ENCODE measurements at regions of chr6 and their contacts with region 1.

Region 1: DNA sequence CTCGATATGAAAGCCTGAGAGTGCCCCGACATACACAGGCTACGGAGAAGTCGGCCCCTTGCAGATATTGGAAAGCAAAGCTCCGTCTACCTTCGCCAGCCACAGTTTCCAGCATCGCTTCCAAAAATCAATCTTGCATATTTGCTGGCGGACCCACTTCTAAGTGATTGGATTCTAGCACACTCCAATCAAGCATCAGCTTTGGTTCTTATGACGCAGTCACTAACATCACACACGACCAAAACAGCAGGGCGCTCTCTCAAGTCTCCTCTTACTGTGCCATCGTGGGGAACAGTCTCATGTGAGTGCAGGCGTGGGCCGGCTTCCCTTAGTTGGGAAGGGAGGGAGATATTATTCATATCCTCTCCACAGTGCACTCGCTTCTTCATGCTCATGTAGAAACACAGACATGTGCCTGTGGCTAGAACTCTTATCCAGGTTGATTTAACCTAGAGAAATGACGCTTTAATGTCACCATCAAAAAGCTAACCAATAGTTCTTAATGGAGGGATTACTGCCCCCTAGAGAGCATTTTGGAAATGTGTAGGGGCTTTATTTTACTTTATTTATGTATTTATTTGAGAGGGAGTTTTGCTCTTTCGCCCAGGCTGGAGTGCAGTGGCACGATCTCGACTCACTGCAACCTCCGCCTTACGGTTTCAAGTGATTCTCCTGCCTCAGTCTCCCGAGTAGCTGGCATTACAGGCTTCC is 229.8 kb downstream of the SOD2 start:
- DNase-seq: no peak
- ATAC-seq: no peak
- H3K4me3 ChIP-seq: no peak overlapping the region
- H3K27ac ChIP-seq: no peak overlapping the region
- H3K4me1 ChIP-seq: no peaks in the 10 kb centered on the region
- H3K27me3 ChIP-seq: peaks cover 0 to 7% (median 0%) of the 10 kb centered on the region in 7 donors
- CTCF ChIP-seq: peak in 5 of 9 donors; percentile 19 to 48 (median 27)

Region 2: DNA sequence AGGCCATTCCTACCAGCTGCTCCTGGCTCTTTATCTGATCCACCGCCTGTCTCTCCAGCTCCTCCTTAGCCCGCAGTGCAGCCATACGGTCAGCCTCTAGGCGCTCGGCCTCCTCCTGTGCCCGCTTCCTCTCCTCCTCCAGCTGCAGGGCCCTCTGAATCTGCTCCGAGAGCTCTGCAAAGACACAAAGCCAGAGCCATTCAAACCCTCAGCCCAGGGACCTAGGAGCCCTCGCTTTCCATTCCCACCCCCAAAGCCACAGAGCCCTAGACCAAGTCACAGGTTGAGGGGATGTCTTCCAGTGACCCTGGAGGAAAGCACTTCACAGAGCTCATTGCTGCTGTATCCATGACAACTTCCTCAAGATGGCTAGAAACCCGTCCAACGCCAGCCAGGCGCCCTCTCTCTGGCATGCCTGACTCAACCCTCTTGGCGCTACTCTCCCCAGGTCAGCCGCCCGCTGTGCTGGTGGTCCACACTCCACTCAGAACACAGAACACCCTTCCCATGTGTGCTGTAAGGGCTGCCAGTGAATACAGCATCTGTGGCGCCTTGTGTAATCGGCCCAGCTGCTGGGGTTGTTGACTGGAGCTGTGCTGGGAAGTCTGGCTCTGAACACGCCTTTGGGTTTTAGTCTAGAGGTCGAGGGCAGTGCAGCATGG is 693.4 kb before region 1 on chr6:
- intact Hi-C with region 1: no loop called
- DNase-seq: peak; percentile 41 to 52
- ATAC-seq: peak; percentile 44 to 85 (median 62)
- H3K4me3 ChIP-seq: no peak overlapping the region
- H3K27ac ChIP-seq: peak overlapping the region; percentile 45 to 77 (median 65)
- H3K4me1 ChIP-seq: peaks cover 12 to 56% (median 44%) of the 10 kb centered on the region in 9 donors
- H3K27me3 ChIP-seq: no peaks in the 10 kb centered on the region
- CTCF ChIP-seq: no peak

Region 3: GRCh38 chr6:159174263-159174969 is 288.9 kb before region 1 on chr6:
- intact Hi-C with region 1: loop called in 3 of 10 experiments (anchors 5 to 10 kb)
- DNase-seq: peak; percentile 56 to 71
- ATAC-seq: peak; percentile 81 to 88 (median 84)
- H3K4me3 ChIP-seq: peak overlapping the region in 2 of 10 donors; percentile 5 to 21
- H3K27ac ChIP-seq: no peak overlapping the region
- H3K4me1 ChIP-seq: peaks cover 0 to 36% (median 13%) of the 10 kb centered on the region in 9 donors
- H3K27me3 ChIP-seq: peaks cover 0 to 59% (median 52%) of the 10 kb centered on the region in 7 donors
- CTCF ChIP-seq: peak; percentile 79 to 97 (median 91)

Region 4: GRCh38 chr6:159739341-159739740 is 276.1 kb after region 1 on chr6:
- intact Hi-C with region 1: no loop called
- DNase-seq: no peak
- ATAC-seq: no peak
- H3K4me3 ChIP-seq: no peak overlapping the region
- H3K27ac ChIP-seq: peak overlapping the region in 1 of 10 donors; percentile 45
- H3K4me1 ChIP-seq: peaks cover 0 to 60% (median 30%) of the 10 kb centered on the region in 9 donors
- H3K27me3 ChIP-seq: no peaks in the 10 kb centered on the region
- CTCF ChIP-seq: no peak

Measured in heart right ventricle (tissue), 16 donors.